Mammary epithelial cell (primary cell): ENCODE measurements at regions of chr5 and their contacts with region 1.

Region 1: DNA sequence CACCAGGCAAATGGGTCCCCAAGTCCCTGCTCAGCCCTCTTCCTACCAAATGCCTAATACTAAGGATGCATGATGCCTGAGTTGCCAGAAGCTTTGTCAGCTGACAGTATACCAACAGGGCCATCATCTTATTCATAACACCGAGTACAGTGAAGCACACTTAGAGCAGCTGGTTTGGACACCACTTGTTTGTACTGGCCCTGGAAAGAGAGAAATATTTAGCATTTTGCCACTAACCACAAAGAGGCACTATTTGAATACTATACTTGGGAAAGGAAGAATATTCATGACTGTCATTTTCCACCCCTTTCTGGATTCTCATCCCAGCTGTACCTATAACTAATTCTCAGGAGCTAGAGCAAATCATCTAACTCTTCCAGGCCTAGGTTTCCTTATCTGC is 364.4 kb upstream of the KIF2A start:
- DNase-seq: peak; percentile 56
- H3K4me3 ChIP-seq: no peak overlapping the region
- H3K27ac ChIP-seq: no peak overlapping the region
- H3K4me1 ChIP-seq: peaks cover 6% of the 10 kb centered on the region
- H3K27me3 ChIP-seq: no peaks in the 10 kb centered on the region
- CTCF ChIP-seq: peak in 1 of 2 donors; percentile 35

Region 2: DNA sequence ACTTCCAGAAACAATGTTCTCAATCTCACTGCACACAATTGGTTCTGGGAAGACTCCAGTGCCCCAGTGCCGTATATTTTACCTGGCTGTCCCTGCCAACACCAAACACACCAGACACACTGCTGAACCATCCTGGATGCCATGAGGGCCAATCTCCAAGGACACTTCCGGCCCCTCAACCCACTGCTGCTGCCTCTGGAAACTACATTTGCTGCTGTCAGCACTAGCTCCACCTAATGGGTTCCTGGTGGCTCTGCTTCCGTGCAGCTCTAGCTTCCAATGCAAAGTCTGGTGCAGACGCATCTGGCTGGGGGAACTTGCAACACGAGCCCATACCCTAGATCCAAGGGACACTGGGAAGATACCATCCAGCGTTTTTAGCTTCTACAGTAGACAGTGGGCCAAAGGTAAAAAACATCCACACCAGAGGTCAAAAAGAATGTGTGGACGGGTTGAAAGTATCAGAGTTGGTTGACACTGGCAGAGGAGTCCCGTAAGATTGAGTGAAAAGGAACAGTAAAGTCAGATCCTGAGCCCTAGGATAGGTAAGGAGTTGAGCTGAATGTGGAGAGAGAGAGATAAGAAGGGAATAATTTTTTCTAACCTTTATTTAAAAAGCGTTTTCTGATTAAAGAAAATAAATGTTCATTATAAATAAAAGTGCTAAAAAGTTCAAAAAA is 264.7 kb after region 1 on chr5:
- CTCF ChIA-PET with region 1: no interaction called
- dilution Hi-C with region 1: no loop called
- in situ Hi-C with region 1: no loop called
- intact Hi-C with region 1: loop called (anchors 5 kb)
- DNase-seq: no peak
- H3K4me3 ChIP-seq: no peak overlapping the region
- H3K27ac ChIP-seq: no peak overlapping the region
- H3K4me1 ChIP-seq: no peaks in the 10 kb centered on the region
- H3K27me3 ChIP-seq: peaks cover 2% of the 10 kb centered on the region
- CTCF ChIP-seq: peak; percentile 11 to 42

Region 3: GRCh38 chr5:62354028-62354874 is 412.6 kb after region 1 on chr5:
- CTCF ChIA-PET with region 1: no interaction called
- dilution Hi-C with region 1: no loop called
- in situ Hi-C with region 1: no loop called
- intact Hi-C with region 1: loop called (anchors 10 kb)
- DNase-seq: peak; percentile 40
- H3K4me3 ChIP-seq: no peak overlapping the region
- H3K27ac ChIP-seq: no peak overlapping the region
- H3K4me1 ChIP-seq: no peaks in the 10 kb centered on the region
- H3K27me3 ChIP-seq: no peaks in the 10 kb centered on the region
- CTCF ChIP-seq: peak; percentile 54 to 57